Sciatic nerve (tissue), 2 donors: ENCODE measurements at regions of chr22 and their contacts with region 1.

Region 1: DNA sequence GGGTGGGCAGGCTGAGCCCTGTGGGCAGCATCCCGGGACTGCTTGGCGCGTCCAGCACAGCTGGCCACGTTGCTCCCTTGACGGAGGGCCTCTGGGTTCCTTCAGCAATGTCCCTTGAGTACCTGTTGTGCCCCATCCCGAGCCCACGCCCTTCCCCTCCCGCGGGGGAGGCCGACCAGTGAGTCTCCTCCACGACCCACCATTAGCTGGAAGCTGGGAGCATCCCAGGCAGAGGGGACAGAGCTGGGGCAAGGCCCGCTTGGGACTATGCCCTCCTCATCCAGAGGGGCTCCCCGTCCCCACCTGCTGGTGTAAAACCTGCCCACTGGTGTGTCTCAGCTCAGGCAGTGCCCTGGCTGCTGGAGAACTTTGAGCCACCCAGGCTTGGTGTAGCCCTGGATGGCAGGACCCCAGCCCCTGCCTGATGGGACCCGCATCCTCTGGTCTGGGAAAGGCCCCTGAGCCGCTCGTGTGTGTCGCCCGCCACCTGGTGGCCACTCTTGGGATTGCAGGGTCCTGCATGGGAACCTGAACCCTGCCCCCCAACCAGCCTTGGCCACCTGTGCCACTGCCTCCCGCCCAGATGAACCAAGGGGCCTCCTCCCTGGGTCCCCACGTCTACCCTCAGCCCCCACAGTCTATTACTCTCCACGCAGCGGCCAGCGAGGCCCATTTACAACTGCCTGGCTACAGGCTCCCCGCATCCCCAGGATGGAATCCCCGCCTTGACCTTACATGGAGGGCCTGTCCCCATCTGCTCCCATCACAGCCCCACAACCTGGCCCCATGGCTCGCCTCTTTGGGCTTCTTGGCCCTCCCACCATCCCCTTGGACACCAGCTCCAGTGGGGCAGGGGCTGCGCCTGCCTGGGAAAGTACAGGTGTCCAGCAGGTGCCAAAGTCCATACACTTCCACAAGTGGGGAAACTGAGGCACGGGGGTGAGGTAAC is 16.6 kb upstream of the ARHGAP8 start:
- DNase-seq: peak; percentile 89
- ATAC-seq: peak; percentile 56

Region 2: GRCh38 chr22:44697423-44698141 is 38.2 kb before region 1 on chr22:
- intact Hi-C with region 1: loop called (anchors 5 kb)
- DNase-seq: peak; percentile 90
- ATAC-seq: peak; percentile 70